ENCODE measurements at regions of chr3 and their contacts with region 1.

Region 1: GRCh38 chr3:154018100-154018696 is 103.0 kb upstream of the ARHGEF26 start:
- DNase-seq: peak; percentile 65
- H3K4me3 Mint-ChIP-seq: no peak overlapping the region
- H3K27ac Mint-ChIP-seq: no peak overlapping the region
- H3K4me1 Mint-ChIP-seq: no peaks in the 10 kb centered on the region
- H3K27me3 Mint-ChIP-seq: no peaks in the 10 kb centered on the region
- CTCF ChIP-seq: peak; percentile 37

Region 2: DNA sequence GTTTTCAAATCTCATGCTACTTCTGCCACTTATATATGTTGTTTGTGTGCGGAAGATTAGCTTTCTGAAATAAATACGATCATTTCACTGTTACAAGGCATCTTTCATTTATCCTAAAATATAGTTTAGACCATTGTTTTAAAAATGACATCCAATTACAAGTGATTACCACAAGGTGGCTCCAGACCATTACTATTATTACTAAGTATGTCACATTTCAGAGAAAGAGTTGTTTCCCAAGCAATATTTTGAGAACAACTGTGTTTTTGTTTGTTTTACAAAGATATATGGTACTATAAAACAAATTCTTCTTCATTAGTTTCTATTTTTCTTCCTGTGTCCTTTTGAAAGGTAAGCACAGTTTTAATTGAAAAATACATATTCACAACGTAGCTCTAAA is 992.2 kb before region 1 on chr3:
- CTCF ChIA-PET with region 1: no interaction called
- POLR2A ChIA-PET with region 1: no interaction called
- intact Hi-C with region 1: loop called (anchors 5 kb)
- DNase-seq: peak; percentile 57
- H3K4me3 Mint-ChIP-seq: no peak overlapping the region
- H3K27ac Mint-ChIP-seq: no peak overlapping the region
- H3K4me1 Mint-ChIP-seq: no peaks in the 10 kb centered on the region
- H3K27me3 Mint-ChIP-seq: no peaks in the 10 kb centered on the region
- CTCF ChIP-seq: peak; percentile 62

Region 3: GRCh38 chr3:153621953-153622352 is 396.2 kb before region 1 on chr3:
- CTCF ChIA-PET with region 1: no interaction called
- POLR2A ChIA-PET with region 1: no interaction called
- intact Hi-C with region 1: no loop called
- DNase-seq: no peak
- H3K4me3 Mint-ChIP-seq: no peak overlapping the region
- H3K27ac Mint-ChIP-seq: no peak overlapping the region
- H3K4me1 Mint-ChIP-seq: peaks cover 12% of the 10 kb centered on the region
- H3K27me3 Mint-ChIP-seq: no peaks in the 10 kb centered on the region
- CTCF ChIP-seq: no peak

Measured in MCF 10A (cell line).